ENCODE measurements at regions of chr12 and their contacts with region 1.

Region 1: DNA sequence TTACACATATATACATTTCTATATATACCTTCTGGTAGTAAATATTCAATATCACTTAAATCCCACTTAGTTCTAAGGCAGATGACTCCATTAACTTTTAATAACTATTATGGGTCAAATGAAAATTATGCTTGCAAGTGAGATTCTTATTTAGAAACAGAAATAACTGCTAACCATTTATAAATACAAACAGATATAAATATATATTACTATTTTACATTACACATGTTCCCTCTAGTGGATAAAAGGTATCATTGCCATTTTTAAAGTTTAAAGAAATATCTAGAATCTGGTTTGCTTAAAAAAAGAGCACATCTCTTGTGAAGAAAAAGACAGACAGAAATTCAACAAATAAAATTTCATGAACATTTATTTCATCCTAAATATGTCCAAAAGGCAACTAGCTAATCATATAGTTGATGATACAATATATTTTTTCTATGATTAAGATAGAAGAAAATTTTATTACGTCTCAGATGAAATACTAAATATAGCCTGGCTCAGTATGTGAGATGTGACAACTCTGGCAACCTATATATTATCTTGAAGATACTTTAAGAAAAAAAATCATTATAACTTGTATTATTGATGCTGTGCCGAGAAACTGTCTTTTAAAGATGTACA is 11.7 kb upstream of the RAD51AP1 start:
- DNase-seq: no peak
- H3K4me3 Mint-ChIP-seq: no peak overlapping the region
- H3K27ac Mint-ChIP-seq: no peak overlapping the region
- H3K4me1 Mint-ChIP-seq: no peaks in the 10 kb centered on the region
- H3K27me3 Mint-ChIP-seq: no peaks in the 10 kb centered on the region
- CTCF ChIP-seq: peak; percentile 17

Region 2: DNA sequence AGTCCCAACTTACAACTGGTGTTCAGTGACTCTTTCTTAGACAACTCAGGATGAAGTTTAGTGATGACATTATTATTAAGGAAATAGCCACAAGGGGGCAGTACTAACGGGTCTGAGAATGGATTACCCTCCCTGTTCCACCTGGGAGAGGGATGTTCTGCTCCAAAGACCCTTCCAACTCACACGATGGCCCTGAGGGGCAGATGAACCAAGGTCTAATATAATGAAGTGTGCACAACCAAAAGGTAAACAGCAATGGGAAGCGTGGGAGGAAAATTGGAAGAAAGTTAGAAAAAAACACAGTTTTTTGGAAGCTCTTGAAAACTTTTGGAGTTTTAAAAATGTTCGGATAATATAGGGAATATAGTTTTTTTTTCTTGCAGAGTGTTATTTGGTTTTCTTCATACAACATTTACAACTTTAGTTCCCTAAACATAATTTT is 105.4 kb before region 1 on chr12:
- CTCF ChIA-PET with region 1: no interaction called
- intact Hi-C with region 1: loop called (anchors 1 kb)
- DNase-seq: peak; percentile 35
- H3K4me3 Mint-ChIP-seq: no peak overlapping the region
- H3K27ac Mint-ChIP-seq: no peak overlapping the region
- H3K4me1 Mint-ChIP-seq: no peaks in the 10 kb centered on the region
- H3K27me3 Mint-ChIP-seq: peaks cover 54% of the 10 kb centered on the region
- CTCF ChIP-seq: peak; percentile 37